Dendritic cell treated with granulocyte-macrophage colony-stimulating factor and Interleukin-4, amounts not matched to agents 40 ng/mL and 50 ng/mL, for 4 days (primary cell): ENCODE measurements at regions of chr10 and their contacts with region 1.

Region 1: DNA sequence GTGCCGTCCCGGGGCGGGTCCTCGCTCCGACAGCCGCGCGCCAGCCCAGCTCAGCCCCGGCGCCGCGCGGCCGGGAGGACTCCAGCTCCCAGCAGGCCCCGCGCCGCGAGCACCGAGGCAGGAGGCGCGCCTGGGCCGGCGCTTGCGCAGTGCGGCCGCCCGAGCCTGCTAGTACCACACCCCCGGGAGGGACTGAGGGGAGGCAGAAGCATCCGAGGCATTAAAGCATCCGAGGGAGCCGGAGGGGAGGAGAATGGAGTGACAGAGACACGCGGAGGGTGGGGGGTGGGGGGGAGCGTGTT is at the start of gene GRK5:
- H3K4me3 Mint-ChIP-seq: peak within 1 kb of the TSS; percentile 85
- H3K27ac Mint-ChIP-seq: peak within 1 kb of the TSS; percentile 89
- H3K4me1 Mint-ChIP-seq: peaks cover 31% of the 10 kb centered on the region
- H3K27me3 Mint-ChIP-seq: peaks cover 17% of the 10 kb centered on the region

Region 2: DNA sequence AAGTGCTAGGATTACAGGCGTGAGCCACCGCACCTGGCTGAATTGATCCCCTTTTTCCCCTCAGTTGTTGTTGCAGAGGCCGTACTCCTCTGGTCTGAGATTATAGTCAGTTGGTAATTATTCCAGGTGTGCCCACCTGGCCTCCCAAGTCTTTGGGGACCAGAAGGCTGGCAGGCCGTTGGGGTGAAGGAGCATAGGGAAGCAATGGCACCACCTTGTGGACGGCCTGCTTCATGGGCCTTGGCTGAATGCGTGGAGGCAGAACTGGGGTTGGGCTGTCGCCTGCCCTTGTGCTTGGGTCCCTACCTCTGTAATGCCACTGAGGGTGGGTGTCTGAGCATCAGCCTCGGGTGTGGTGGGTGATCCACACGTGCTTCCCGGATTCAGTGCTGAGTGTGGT is 209.5 kb after region 1 on chr10:
- intact Hi-C with region 1: loop called (anchors 1 kb)
- H3K4me3 Mint-ChIP-seq: no peak overlapping the region
- H3K27ac Mint-ChIP-seq: no peak overlapping the region
- H3K4me1 Mint-ChIP-seq: peaks cover 7% of the 10 kb centered on the region
- H3K27me3 Mint-ChIP-seq: peaks cover 1% of the 10 kb centered on the region